PC-3 (cell line): ENCODE measurements at regions of chr14 and their contacts with region 1.

Region 1: DNA sequence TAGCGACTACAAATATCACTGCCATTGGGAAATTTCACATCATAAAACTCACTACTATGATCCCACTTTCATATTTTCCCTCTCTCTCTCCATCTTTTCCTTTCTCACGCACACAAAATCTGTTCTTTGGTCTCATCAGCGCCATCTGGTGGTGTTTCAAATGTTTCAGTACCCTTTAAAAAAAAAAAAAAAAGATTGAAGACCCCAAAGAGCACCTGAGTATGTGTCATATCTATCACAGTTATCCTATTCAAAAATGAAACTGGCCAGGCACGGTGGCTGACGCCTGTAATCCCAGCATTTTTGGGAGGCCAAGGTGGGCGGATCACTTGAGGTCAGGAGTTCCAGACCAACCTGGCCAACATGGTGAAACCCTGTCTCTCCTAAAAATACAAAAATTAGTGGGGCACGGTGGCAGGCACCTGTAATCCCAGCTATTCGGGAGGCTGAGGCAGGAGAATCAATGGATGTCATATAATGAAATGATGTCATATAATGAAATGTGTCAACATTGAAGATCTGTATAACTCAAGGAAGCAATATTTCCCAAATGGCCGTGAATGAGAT is 72.4 kb downstream of the TTC9 start:
- DNase-seq: peak; percentile 73
- ATAC-seq: peak; percentile 30; the same call in 1 of the 2 replicates
- H3K4me3 ChIP-seq: no peak overlapping the region
- H3K27ac ChIP-seq: no peak overlapping the region
- H3K4me1 ChIP-seq: peaks cover 24% of the 10 kb centered on the region
- H3K27me3 ChIP-seq: no peaks in the 10 kb centered on the region
- CTCF ChIP-seq: peak; percentile 88

Region 2: GRCh38 chr14:70045844-70046535 is 668.1 kb before region 1 on chr14:
- CTCF ChIA-PET with region 1: no interaction called
- POLR2A ChIA-PET with region 1: no interaction called
- intact Hi-C with region 1: loop called (anchors 10 kb)
- DNase-seq: peak; percentile 82
- ATAC-seq: peak; percentile 86
- H3K4me3 ChIP-seq: no peak overlapping the region
- H3K27ac ChIP-seq: no peak overlapping the region
- H3K4me1 ChIP-seq: peaks cover 27% of the 10 kb centered on the region; the same call in 1 of the 2 replicates
- H3K27me3 ChIP-seq: peaks cover 11% of the 10 kb centered on the region; the same call in 1 of the 2 replicates
- CTCF ChIP-seq: peak; percentile 93

Region 3: DNA sequence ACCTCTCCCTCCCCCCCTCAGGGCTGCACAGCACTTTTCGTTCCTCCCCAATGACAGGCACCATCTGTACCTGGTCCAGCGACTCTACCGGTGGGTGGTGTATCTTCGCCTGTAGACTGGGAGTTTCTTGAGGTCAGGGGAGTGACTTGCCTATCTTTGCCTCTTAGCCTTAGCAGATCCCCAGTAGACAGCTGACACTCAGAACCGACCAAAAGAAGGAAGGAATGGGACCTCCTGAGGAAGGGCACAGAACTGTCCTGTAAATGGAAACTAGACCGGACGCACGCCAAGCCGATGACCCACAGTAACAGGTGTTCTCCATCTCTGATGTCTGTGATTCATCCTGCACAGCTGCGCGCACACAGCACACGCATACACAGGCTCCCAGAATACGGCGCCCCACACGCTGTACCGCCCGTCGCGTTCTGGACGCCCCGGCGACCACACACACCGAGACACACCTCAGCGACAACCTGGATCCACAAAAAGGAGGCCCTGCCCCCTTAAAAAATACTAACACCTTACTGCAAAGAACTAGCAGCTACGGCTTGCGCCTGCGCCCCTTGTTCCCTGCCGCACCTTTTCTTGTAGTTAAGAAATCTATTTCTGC is 73.1 kb before region 1 on chr14:
- CTCF ChIA-PET with region 1: no interaction called
- POLR2A ChIA-PET with region 1: no interaction called
- intact Hi-C with region 1: loop called (anchors 1 kb)
- DNase-seq: peak; percentile 69
- ATAC-seq: peak; percentile 78
- H3K4me3 ChIP-seq: peak overlapping the region; percentile 85
- H3K27ac ChIP-seq: no peak overlapping the region
- H3K4me1 ChIP-seq: peaks cover 17% of the 10 kb centered on the region; the same call in 1 of the 2 replicates
- H3K27me3 ChIP-seq: peaks cover 30% of the 10 kb centered on the region
- CTCF ChIP-seq: no peak

Region 4: DNA sequence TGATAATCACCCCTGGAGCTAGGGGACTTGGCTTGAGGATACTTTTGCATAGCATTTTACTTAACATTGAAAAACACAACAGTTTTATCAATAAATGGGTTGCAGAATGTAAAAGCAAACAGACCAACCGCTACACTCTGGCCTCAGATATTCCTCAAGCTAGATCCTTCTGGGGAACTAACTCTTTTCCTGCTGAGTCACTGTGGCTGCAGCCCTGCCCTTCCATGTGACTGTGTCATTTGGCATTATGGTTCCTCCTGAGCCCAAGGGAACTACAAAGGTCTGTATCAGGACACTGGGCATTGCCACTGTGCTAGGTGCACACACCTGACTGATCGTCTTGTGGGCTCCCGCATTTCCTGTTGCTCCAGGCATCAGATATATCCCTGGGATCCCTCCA is 15.8 kb before region 1 on chr14:
- CTCF ChIA-PET with region 1: interaction called, 3 read pairs
- POLR2A ChIA-PET with region 1: no interaction called
- intact Hi-C with region 1: loop called (anchors 2 kb)
- DNase-seq: peak; percentile 87
- ATAC-seq: peak; percentile 92
- H3K4me3 ChIP-seq: peak overlapping the region; percentile 9
- H3K27ac ChIP-seq: peak overlapping the region; percentile 96
- H3K4me1 ChIP-seq: peaks cover 27% of the 10 kb centered on the region
- H3K27me3 ChIP-seq: no peaks in the 10 kb centered on the region
- CTCF ChIP-seq: no peak

Region 5: DNA sequence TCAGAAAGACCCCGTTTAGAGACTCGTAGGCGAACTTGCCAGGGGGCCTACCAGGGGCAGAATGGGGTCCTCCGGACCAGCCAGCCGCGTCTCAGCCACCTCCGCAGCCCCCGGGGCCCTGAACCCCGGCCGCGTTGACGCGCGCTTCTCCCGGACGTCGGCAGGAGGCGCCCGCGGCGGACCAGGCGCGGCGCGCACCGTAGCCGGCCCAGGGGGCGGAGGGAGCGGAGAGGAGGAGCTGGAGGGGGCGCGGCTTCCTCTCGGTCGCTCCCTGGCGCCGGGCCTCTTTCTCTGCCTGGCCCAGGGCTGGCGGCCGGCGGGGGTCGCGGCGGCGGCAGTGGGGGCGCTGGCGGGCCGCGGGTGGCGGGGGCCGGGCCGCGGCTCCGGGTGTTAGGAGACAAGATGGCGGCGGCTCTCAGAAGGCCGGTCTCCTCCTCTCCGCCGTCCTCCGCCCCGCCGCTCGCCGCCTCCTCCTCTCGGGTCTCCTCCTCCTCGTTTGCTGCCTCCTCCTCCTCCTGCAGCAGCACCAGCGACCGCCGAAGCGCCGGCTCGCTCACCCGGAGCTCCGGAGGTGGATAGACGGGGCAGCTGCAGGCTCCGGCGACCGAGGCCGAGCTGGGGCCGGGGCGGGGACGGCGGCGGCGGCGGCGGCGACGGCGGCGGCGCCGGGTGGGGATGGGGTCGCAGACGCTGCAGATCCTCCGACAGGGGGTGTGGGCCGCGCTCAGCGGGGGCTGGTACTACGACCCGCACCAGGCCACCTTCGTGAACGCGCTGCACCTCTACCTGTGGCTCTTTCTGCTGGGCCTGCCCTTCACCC is 193.2 kb after region 1 on chr14 and contains the start of gene PCNX1:
- CTCF ChIA-PET with region 1: interaction called, 18 read pairs
- POLR2A ChIA-PET with region 1: no interaction called
- intact Hi-C with region 1: no loop called
- DNase-seq: peak; percentile 86
- ATAC-seq: peak; percentile 69
- H3K4me3 ChIP-seq: peak within 1 kb of the TSS; percentile 76
- H3K27ac ChIP-seq: peak within 1 kb of the TSS; percentile 21; the same call in 1 of the 2 replicates
- H3K4me1 ChIP-seq: peaks cover 19% of the 10 kb centered on the region
- H3K27me3 ChIP-seq: no peaks in the 10 kb centered on the region
- CTCF ChIP-seq: peak; percentile 82
- total RNA-seq, gene PCNX1: 21.5 and 23.3 TPM in 2 replicates